K562 (cell line): ENCODE measurements at regions of chr3 and their contacts with region 1.

Region 1: GRCh38 chr3:52270252-52270754 is 8.1 kb downstream of the WDR82 start:
- DNase-seq: no peak
- ATAC-seq: no peak
- H3K4me3 ChIP-seq: no peak overlapping the region
- H3K27ac ChIP-seq: peak overlapping the region; percentile 17; the same call in 1 of the 3 replicates
- H3K4me1 ChIP-seq: peaks cover 0 to 4% of the 10 kb centered on the region in 2 experiments; a peak in 3 of 5 replicates
- H3K27me3 ChIP-seq: no peaks in the 10 kb centered on the region
- CTCF ChIP-seq: no peak
- EP300 ChIP-seq: no peak
- POLR2A ChIP-seq: no peak
- RAD21 ChIP-seq: no peak

Region 2: GRCh38 chr3:52259448-52259847 is 10.9 kb before region 1 on chr3:
- CTCF ChIA-PET with region 1: no interaction called
- POLR2A ChIA-PET with region 1: interaction called, 10 read pairs
- in situ Hi-C with region 1: no loop called
- intact Hi-C with region 1: no loop called
- DNase-seq: no peak
- ATAC-seq: no peak
- H3K4me3 ChIP-seq: no peak overlapping the region
- H3K27ac ChIP-seq: no peak overlapping the region
- H3K4me1 ChIP-seq: peaks cover 0 to 19% of the 10 kb centered on the region in 2 experiments; a peak in 3 of 5 replicates
- H3K27me3 ChIP-seq: no peaks in the 10 kb centered on the region
- CTCF ChIP-seq: no peak
- EP300 ChIP-seq: no peak
- POLR2A ChIP-seq: no peak
- RAD21 ChIP-seq: no peak